Mammary epithelial cell (primary cell): ENCODE measurements at regions of chr9 and their contacts with region 1.

Region 1: GRCh38 chr9:84759300-84759750 is 89.8 kb downstream of the NTRK2 start:
- DNase-seq: peak; percentile 97
- H3K4me3 ChIP-seq: no peak overlapping the region
- H3K27ac ChIP-seq: peak overlapping the region; percentile 82
- H3K4me1 ChIP-seq: peaks cover 12% of the 10 kb centered on the region
- H3K27me3 ChIP-seq: no peaks in the 10 kb centered on the region
- CTCF ChIP-seq: no peak

Region 2: GRCh38 chr9:84711902-84712301 is 47.4 kb before region 1 on chr9:
- CTCF ChIA-PET with region 1: no interaction called
- dilution Hi-C with region 1: loop called (anchors 5 kb)
- in situ Hi-C with region 1: no loop called
- intact Hi-C with region 1: loop called (anchors 5 kb)
- DNase-seq: peak; percentile 97
- H3K4me3 ChIP-seq: no peak overlapping the region
- H3K27ac ChIP-seq: peak overlapping the region; percentile 97
- H3K4me1 ChIP-seq: peaks cover 32% of the 10 kb centered on the region
- H3K27me3 ChIP-seq: no peaks in the 10 kb centered on the region
- CTCF ChIP-seq: no peak

Region 3: GRCh38 chr9:84718476-84718875 is 40.8 kb before region 1 on chr9:
- CTCF ChIA-PET with region 1: no interaction called
- dilution Hi-C with region 1: loop called (anchors 5 kb)
- in situ Hi-C with region 1: no loop called
- intact Hi-C with region 1: loop called (anchors 5 kb)
- DNase-seq: no peak
- H3K4me3 ChIP-seq: no peak overlapping the region
- H3K27ac ChIP-seq: no peak overlapping the region
- H3K4me1 ChIP-seq: no peaks in the 10 kb centered on the region
- H3K27me3 ChIP-seq: no peaks in the 10 kb centered on the region
- CTCF ChIP-seq: no peak

Region 4: DNA sequence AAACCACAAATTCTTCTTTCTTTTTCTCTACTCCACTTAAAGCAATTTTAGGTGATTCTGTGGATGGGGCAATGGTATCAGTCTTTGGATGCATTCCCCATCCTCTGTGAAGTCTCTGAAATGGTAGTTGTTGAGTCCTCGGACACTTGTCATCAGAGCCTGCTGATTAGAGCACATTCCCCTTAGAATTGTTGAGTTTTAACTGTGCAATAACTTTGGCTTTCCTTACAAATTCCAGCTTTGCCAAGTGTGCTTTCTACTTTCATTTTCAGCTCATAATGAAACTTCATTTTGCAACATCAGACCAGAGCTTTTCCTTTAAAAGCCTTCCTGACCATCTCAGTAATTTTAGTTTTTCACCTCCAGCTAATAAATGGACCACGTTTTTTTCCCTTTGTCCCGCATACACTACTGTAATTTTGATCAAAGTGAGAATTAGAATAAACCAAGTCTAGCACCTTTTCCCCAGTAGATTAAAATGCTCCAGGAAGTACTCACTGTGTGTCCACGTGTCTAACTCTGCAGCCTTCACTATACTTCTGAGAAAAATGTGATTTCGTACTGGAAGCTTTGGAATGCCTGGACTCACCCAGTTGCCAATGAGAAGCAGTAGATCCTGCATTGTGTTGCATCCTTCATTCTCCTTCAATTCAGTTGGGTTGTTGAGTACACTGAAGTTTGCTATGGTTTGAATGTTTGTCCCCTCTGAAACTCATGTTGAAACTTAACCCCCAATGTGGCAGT is 45.8 kb after region 1 on chr9:
- CTCF ChIA-PET with region 1: no interaction called
- dilution Hi-C with region 1: no loop called
- in situ Hi-C with region 1: no loop called
- intact Hi-C with region 1: no loop called
- DNase-seq: no peak
- H3K4me3 ChIP-seq: no peak overlapping the region
- H3K27ac ChIP-seq: no peak overlapping the region
- H3K4me1 ChIP-seq: no peaks in the 10 kb centered on the region
- H3K27me3 ChIP-seq: no peaks in the 10 kb centered on the region
- CTCF ChIP-seq: no peak

Region 5: GRCh38 chr9:84822589-84823233 is 63.4 kb after region 1 on chr9:
- CTCF ChIA-PET with region 1: no interaction called
- dilution Hi-C with region 1: no loop called
- in situ Hi-C with region 1: no loop called
- intact Hi-C with region 1: no loop called
- DNase-seq: no peak
- H3K4me3 ChIP-seq: no peak overlapping the region
- H3K27ac ChIP-seq: no peak overlapping the region
- H3K4me1 ChIP-seq: no peaks in the 10 kb centered on the region
- H3K27me3 ChIP-seq: no peaks in the 10 kb centered on the region
- CTCF ChIP-seq: no peak